Astrocyte of the cerebellum (primary cell): ENCODE measurements at regions of chr20 and their contacts with region 1.

Region 1: GRCh38 chr20:986733-987355 is 15.3 kb downstream of the RSPO4 start:
- DNase-seq: no peak
- H3K4me3 ChIP-seq: no peak overlapping the region
- CTCF ChIP-seq: no peak

Region 2: GRCh38 chr20:884983-885952 is 101.6 kb before region 1 on chr20:
- in situ Hi-C with region 1: loop called (anchors 5 kb)
- DNase-seq: no peak
- H3K4me3 ChIP-seq: no peak overlapping the region
- CTCF ChIP-seq: no peak

Region 3: DNA sequence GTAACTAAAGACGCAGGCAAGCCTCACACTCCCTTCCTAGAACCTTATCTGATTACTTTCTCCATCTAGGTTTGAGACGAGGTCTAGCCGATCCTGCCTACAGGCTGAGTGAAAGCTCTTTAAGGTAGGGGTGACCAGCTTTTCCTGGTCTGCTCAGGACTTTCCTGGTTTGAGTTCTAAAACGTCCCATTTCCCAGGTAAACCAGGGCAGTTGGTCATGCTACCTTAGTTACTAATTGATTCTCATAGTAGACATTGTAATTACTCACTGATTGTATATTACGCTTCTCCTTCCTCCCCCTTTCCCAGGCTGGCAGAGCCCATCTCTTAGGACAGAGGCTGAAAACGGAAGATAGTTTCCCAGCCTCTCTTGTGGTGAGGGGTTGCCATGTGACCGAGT is 43.1 kb after region 1 on chr20:
- in situ Hi-C with region 1: loop called (anchors 5 kb)
- DNase-seq: no peak
- H3K4me3 ChIP-seq: no peak overlapping the region
- CTCF ChIP-seq: no peak

Region 4: GRCh38 chr20:1266167-1266973 is 279.5 kb after region 1 on chr20 and contains the start of gene SNPH:
- in situ Hi-C with region 1: no loop called
- DNase-seq: peak; percentile 36
- H3K4me3 ChIP-seq: peak within 1 kb of the TSS; percentile 62
- CTCF ChIP-seq: no peak